Activated CD4-positive, alpha-beta T cell treated with anti-CD3 and anti-CD28 coated beads, Interleukin-2, amount 10 ng/mL, durations not matched to agents 24 days and 14 days (primary cell): ENCODE measurements at regions of chr9 and their contacts with region 1.

Region 1: GRCh38 chr9:94726495-94727191 is at the start of gene AOPEP:
- DNase-seq: peak; percentile 100
- H3K4me3 Mint-ChIP-seq: peak within 1 kb of the TSS; percentile 94
- H3K27ac Mint-ChIP-seq: peak within 1 kb of the TSS; percentile 97
- H3K4me1 Mint-ChIP-seq: peaks cover 6% of the 10 kb centered on the region
- H3K27me3 Mint-ChIP-seq: no peaks in the 10 kb centered on the region
- total RNA-seq, gene AOPEP: 17.9 and 20.7 TPM in 2 replicates

Region 2: GRCh38 chr9:94166237-94166963 is 560.2 kb before region 1 on chr9:
- intact Hi-C with region 1: loop called (anchors 5 kb)
- DNase-seq: peak; percentile 98
- H3K4me3 Mint-ChIP-seq: peak overlapping the region; percentile 90
- H3K27ac Mint-ChIP-seq: peak overlapping the region; percentile 88
- H3K4me1 Mint-ChIP-seq: peaks cover 37% of the 10 kb centered on the region
- H3K27me3 Mint-ChIP-seq: no peaks in the 10 kb centered on the region

Region 3: DNA sequence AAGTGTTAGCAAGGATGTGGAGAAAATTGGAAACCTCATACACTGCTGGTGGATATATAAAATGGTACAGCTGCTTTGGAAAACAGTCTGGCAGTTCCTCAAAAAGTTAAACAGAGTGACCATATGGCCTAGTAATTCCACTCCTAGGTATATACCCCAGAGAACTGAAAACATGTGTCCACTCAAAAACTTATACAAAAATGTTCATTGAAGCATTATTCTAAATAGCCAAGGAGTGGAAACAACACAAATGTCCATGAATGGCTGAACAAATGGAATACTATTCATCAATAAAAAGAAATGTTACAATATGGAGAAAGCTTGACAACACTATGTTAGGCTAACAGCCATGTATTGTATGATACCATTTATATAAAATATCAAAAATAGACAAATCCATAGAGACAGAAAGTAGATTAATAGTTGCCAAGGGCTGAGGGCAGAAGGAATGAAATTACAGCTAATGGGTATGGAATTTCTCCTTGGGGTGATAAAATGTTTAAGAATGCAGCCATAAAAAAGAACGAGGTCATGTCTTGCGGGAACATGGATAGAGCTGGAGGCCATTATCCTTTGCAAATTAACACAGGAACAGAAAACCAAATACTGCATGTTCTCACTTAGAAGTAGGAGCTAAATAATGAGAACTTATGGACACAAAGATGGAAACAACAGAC is 53.7 kb before region 1 on chr9:
- intact Hi-C with region 1: loop called (anchors 1 kb)
- DNase-seq: no peak
- H3K4me3 Mint-ChIP-seq: no peak overlapping the region
- H3K27ac Mint-ChIP-seq: no peak overlapping the region
- H3K4me1 Mint-ChIP-seq: peaks cover 8% of the 10 kb centered on the region
- H3K27me3 Mint-ChIP-seq: peaks cover 23% of the 10 kb centered on the region

Region 4: GRCh38 chr9:94703488-94704140 is 23.0 kb before region 1 on chr9:
- intact Hi-C with region 1: no loop called
- DNase-seq: no peak
- H3K4me3 Mint-ChIP-seq: no peak overlapping the region
- H3K27ac Mint-ChIP-seq: no peak overlapping the region
- H3K4me1 Mint-ChIP-seq: no peaks in the 10 kb centered on the region
- H3K27me3 Mint-ChIP-seq: peaks cover 18% of the 10 kb centered on the region

Region 5: DNA sequence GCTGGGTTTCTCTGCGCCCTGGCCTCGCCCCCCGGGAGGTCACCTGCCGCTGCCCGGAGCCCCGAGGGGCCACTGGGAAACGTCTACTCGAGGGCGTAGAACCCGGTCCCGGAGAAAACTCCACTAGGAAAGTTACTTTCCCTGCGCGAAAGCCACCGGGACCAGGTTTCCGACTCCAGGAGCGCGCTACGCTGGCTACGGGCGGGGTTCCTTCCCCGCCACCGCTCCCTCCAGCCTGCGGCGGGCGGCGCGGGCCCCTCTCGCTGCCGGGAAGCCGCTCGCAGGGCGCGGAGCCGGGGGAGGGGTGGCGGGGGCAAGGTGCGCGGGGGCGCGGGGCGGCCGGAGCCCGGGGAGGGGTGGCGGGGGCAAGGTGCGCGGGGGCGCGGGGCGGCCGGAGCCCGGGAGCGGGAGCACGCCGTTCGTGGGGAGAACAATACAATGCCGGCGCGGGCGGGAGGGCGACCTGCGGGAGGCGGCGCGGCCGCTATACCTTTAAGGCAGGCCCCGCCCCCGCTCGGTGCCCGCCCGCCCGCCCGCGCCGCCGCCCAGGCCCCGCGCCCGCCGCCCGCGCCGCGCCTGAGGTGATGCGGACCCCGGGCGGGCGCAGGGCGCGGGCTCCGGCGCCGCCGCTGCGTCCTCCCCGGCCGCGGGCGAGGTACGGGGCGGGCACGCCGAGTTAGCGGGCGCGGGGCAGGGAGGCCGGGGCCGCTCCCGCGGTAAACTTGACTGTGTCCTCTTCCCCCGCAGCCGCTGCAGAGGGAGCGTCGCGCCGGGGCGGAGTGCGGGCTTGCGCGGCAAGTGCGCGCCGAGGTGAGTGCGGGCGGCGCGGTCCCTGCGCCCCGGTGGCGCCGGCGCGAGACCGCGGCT is 278.0 kb after region 1 on chr9:
- intact Hi-C with region 1: loop called (anchors 2 kb)
- DNase-seq: peak; percentile 83
- H3K4me3 Mint-ChIP-seq: peak overlapping the region; percentile 78
- H3K27ac Mint-ChIP-seq: peak overlapping the region; percentile 44
- H3K4me1 Mint-ChIP-seq: peaks cover 31% of the 10 kb centered on the region
- H3K27me3 Mint-ChIP-seq: peaks cover 28% of the 10 kb centered on the region

Region 6: GRCh38 chr9:95171001-95171400 is 444.4 kb after region 1 on chr9:
- intact Hi-C with region 1: loop called (anchors 1 kb)
- DNase-seq: peak; percentile 67
- H3K4me3 Mint-ChIP-seq: peak overlapping the region; percentile 37
- H3K27ac Mint-ChIP-seq: peak overlapping the region; percentile 74
- H3K4me1 Mint-ChIP-seq: peaks cover 24% of the 10 kb centered on the region
- H3K27me3 Mint-ChIP-seq: no peaks in the 10 kb centered on the region